ENCODE measurements at regions of chr17 and their contacts with region 1.

Region 1: GRCh38 chr17:45307290-45308015 is 9.4 kb downstream of the MAP3K14 start:
- DNase-seq: peak; percentile 42
- ATAC-seq: peak; percentile 69
- H3K4me3 Mint-ChIP-seq: peak overlapping the region; percentile 81
- H3K27ac Mint-ChIP-seq: peak overlapping the region; percentile 100
- H3K4me1 Mint-ChIP-seq: peaks cover 93% of the 10 kb centered on the region
- H3K27me3 Mint-ChIP-seq: no peaks in the 10 kb centered on the region
- CTCF ChIP-seq: no peak

Region 2: GRCh38 chr17:45277216-45277849 is 30.1 kb before region 1 on chr17:
- CTCF ChIA-PET with region 1: interaction called, 35 read pairs
- POLR2A ChIA-PET with region 1: interaction called, 291 read pairs
- intact Hi-C with region 1: no loop called
- DNase-seq: peak; percentile 76
- ATAC-seq: peak; percentile 98
- H3K4me3 Mint-ChIP-seq: no peak overlapping the region
- H3K27ac Mint-ChIP-seq: peak overlapping the region; percentile 21
- H3K4me1 Mint-ChIP-seq: peaks cover 5% of the 10 kb centered on the region
- H3K27me3 Mint-ChIP-seq: no peaks in the 10 kb centered on the region
- CTCF ChIP-seq: no peak

Region 3: GRCh38 chr17:45293413-45294211 is 13.8 kb before region 1 on chr17:
- CTCF ChIA-PET with region 1: interaction called, 38 read pairs
- POLR2A ChIA-PET with region 1: interaction called, 436 read pairs
- intact Hi-C with region 1: loop called (anchors 1 kb)
- DNase-seq: no peak
- ATAC-seq: peak; percentile 35
- H3K4me3 Mint-ChIP-seq: peak overlapping the region; percentile 28
- H3K27ac Mint-ChIP-seq: peak overlapping the region; percentile 73
- H3K4me1 Mint-ChIP-seq: peaks cover 87% of the 10 kb centered on the region
- H3K27me3 Mint-ChIP-seq: no peaks in the 10 kb centered on the region
- CTCF ChIP-seq: no peak

Region 4: DNA sequence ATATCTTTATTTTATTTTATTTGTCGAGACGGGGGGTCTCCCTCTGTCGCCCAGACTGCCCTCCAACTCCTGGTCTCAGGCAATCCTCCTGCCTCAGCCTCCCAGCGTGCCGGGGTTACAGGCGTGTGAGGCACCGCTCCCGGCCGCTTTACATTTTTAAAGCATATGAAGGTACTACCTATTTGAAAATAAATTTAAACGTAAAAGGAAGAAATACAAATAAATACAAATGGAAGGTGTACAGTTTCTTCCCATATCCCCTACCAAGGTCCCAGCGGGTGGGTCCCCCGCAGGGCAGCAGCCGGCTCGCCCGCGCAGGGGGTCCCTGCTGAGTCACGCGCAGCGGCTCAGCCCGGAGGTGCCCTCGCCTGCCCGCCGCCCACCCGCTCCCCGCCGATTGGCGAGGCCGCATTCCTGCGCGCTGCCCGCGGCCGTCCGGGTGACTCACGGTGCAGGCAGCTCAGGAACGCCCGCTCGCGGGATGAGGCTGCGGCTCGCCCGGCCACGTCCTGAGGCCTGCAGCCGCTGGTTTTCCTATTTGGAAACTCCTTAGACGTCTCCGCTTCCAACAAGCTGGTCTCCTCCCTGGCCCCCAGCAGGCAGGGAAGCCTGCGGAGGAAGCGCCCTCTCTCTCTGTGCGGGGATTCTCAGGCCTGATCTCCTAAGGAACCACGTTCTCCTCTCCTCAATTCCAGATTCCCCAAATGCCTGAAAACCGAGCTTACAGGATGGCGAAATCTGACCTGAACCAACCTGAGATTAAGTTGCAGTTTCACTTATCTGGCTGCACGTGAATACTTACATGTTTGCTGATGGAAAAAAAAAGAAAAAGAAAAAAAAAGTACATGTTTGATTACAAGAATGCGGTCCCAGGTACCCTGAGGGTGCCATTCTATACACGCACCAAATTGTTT is 64.2 kb after region 1 on chr17:
- CTCF ChIA-PET with region 1: no interaction called
- POLR2A ChIA-PET with region 1: interaction called, 12 read pairs
- intact Hi-C with region 1: no loop called
- DNase-seq: peak; percentile 31
- ATAC-seq: peak; percentile 45
- H3K4me3 Mint-ChIP-seq: peak overlapping the region; percentile 49
- H3K27ac Mint-ChIP-seq: no peak overlapping the region
- H3K4me1 Mint-ChIP-seq: peaks cover 18% of the 10 kb centered on the region
- H3K27me3 Mint-ChIP-seq: peaks cover 12% of the 10 kb centered on the region
- CTCF ChIP-seq: no peak